Right ventricle myocardium superior (tissue), 1 donor: ENCODE measurements at regions of chr1 and their contacts with region 1.

Region 1: GRCh38 chr1:175129997-175130648 is 62.5 kb downstream of the KIAA0040 start:
- DNase-seq: no peak
- ATAC-seq: peak; percentile 30

Region 2: GRCh38 chr1:175035865-175036264 is 94.3 kb before region 1 on chr1:
- intact Hi-C with region 1: loop called (anchors 5 kb)
- DNase-seq: no peak
- ATAC-seq: no peak

Region 3: DNA sequence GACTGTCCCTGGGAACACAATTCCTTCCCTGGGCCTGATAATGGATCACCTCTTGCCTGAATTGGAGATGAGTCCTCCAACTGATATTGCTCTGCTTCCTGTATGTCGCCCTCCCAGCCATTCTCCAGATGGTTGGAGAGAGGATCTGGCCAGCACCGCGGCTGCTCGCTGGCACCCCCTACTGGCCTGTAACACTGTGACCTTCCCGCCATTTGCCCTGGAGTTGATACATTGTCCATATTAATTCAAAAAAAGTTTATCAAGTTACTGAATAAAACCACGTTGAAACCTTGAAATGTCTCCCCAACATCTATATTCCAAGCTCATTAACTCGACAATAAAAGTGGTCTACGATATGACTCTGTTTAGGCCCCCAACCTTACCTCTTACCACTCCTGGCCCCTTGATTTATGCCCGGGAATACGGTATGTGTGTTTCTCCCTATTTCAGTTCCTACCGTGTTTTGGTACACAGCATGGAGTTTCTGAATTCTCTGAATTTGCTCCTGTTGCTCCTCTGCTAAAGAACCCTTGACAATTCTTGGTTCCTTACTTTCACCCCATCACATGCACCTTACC is 304.2 kb after region 1 on chr1:
- intact Hi-C with region 1: no loop called
- DNase-seq: no peak
- ATAC-seq: no peak